ENCODE measurements at regions of chr6 and their contacts with region 1.

Region 1: DNA sequence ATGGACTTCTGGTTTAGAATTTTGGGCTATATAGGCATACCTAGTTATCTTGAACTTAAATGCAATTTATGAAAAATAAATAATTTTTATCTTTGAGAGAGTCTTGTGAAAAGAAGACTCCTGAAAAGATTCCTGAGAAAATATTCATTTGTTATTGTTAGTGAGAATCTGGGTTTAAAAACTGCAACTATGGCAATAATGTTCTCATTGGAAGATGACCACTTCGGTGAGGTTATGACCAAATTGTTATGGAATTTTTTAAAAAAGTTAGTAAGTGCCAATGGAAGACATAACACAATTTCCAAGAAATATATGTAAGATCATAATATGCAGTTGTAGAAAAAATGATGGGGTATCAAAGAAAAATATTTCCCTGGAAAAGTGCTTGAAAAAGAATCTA is 46.3 kb downstream of the GRIK2 start:
- DNase-seq: no peak
- H3K4me3 ChIP-seq: no peak overlapping the region
- H3K27ac ChIP-seq: no peak overlapping the region
- H3K4me1 ChIP-seq: no peaks in the 10 kb centered on the region
- H3K27me3 ChIP-seq: no peaks in the 10 kb centered on the region
- CTCF ChIP-seq: no peak

Region 2: GRCh38 chr6:101477436-101477835 is 37.6 kb after region 1 on chr6:
- CTCF ChIA-PET with region 1: no interaction called
- POLR2A ChIA-PET with region 1: no interaction called
- intact Hi-C with region 1: no loop called
- DNase-seq: no peak
- H3K4me3 ChIP-seq: no peak overlapping the region
- H3K27ac ChIP-seq: no peak overlapping the region
- H3K4me1 ChIP-seq: no peaks in the 10 kb centered on the region
- H3K27me3 ChIP-seq: no peaks in the 10 kb centered on the region
- CTCF ChIP-seq: no peak

Region 3: GRCh38 chr6:102114402-102114801 is 674.6 kb after region 1 on chr6:
- CTCF ChIA-PET with region 1: no interaction called
- POLR2A ChIA-PET with region 1: no interaction called
- intact Hi-C with region 1: loop called (anchors 5 kb)
- DNase-seq: no peak
- H3K4me3 ChIP-seq: no peak overlapping the region
- H3K27ac ChIP-seq: no peak overlapping the region
- H3K4me1 ChIP-seq: no peaks in the 10 kb centered on the region
- H3K27me3 ChIP-seq: no peaks in the 10 kb centered on the region
- CTCF ChIP-seq: peak; percentile 59